ENCODE measurements at regions of chr22 and their contacts with region 1.

Region 1: DNA sequence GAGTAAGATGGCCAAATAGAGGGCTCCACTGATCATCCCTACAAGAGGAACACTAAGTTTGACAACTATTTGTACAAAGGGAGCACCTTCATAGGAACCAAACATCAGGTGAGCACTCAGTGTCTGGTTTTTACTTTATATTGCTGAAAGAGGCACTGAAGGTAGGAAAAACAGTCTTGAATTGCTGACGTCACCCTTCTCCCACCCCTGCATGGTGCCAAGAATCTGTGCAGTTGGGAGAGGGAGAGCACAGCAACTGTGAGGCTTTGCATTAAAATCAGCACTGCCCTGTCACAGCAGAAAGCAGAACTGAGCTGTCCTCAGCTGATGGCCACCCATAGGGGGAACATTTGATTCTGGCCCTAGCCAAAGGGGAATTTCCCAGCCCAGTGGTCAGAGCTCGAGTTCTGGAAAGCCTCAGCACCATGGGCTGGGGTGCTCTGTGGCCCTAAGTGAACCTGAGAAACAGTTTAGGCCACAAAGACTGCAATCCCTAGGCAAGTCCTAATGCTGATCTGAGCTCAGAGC is 37.9 kb downstream of the PIWIL3 start:
- DNase-seq: no peak
- ATAC-seq: no peak
- H3K4me3 ChIP-seq: no peak overlapping the region
- H3K27ac ChIP-seq: no peak overlapping the region
- H3K4me1 ChIP-seq: no peaks in the 10 kb centered on the region
- CTCF ChIP-seq: no peak
- EP300 ChIP-seq: no peak
- POLR2A ChIP-seq: no peak
- RAD21 ChIP-seq: no peak

Region 2: DNA sequence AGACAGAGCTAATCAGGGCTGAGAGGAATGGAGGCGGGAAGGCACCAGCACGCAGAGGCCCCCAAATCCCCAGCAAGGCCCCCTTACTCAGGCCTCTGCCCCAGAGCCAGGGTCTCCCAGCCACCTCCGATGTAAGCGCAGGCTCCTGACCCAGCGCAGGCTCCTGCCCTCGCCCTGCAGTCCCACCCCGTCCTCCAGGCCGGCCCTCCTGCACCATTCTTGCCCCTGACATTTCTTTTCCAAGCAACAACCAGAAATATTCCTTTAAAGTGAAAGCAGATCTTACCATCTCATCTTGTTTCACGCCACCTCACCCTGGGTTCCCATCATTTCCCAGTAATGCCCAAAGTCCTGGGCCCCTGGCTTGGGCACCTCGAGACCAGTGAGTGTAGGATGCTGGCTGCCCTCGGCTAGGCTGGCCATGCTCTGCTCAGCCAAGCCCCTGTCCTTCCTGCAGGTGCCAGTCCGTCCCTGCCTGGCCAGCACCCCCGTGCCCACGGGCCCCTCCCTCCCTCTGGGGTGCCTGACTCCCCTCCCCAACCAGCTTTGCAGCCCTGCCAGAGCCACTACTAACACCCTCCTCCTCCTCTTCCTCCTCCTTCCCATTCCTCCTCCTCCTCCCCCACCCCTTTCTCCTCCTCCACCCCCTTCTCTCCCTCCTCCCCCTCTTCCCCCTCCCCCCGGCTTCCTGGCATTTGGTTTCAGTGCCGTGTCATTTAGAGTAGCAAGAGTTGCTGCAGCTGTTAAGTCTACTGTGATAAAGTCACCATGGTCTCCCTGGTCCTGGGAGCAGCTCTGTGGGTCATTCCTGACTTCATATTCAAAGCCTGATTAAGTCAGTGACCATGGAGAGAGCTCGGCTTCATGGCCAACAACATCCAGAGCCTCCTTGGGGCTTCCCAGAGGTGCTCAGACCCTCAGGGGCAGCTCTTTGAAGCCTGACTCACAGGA is 40.8 kb before region 1 on chr22:
- CTCF ChIA-PET with region 1: no interaction called
- POLR2A ChIA-PET with region 1: no interaction called
- DNase-seq: no peak
- ATAC-seq: no peak
- H3K4me3 ChIP-seq: no peak overlapping the region
- H3K27ac ChIP-seq: no peak overlapping the region
- H3K4me1 ChIP-seq: no peaks in the 10 kb centered on the region
- CTCF ChIP-seq: no peak
- EP300 ChIP-seq: no peak
- POLR2A ChIP-seq: no peak
- RAD21 ChIP-seq: no peak

Region 3: DNA sequence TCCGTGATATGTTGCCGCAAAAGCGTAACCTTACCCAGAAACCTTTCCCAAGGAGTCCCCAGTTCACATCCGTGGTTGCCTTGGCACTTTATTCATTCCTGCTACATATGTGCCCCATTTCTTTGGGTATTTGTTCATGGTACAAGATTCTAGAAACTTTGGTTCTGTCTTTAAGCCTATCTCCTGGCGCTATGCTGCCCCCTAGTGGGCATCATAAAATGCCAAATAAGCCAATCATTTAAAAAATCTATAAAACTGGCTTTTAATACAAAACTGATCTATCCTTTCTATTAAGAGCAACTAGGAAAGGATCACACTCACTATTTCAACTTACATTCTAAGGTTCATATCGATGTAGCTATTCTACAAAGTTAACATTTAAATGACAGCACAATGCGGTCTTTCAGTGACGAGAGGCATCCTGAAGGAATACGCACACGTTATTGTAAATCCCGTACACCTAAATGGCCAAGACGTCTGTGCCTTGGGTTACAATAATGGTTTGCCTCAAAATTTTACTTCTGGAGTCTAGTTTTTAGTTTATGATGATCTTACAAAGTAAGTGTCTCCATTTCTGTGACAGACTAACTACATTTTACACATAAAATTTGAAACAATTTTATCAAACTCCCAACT is 21.7 kb after region 1 on chr22:
- CTCF ChIA-PET with region 1: interaction called, 13 read pairs
- POLR2A ChIA-PET with region 1: no interaction called
- DNase-seq: peak; percentile 14 to 40
- ATAC-seq: peak in 1 of 2 experiments; percentile 35; a peak in 1 of 6 replicates
- H3K4me3 ChIP-seq: no peak overlapping the region
- H3K27ac ChIP-seq: no peak overlapping the region
- H3K4me1 ChIP-seq: no peaks in the 10 kb centered on the region
- CTCF ChIP-seq: peak; percentile 82
- EP300 ChIP-seq: no peak
- POLR2A ChIP-seq: no peak
- RAD21 ChIP-seq: peak; percentile 80 to 86

Region 4: GRCh38 chr22:24768537-24769374 is 32.2 kb after region 1 on chr22:
- CTCF ChIA-PET with region 1: no interaction called
- POLR2A ChIA-PET with region 1: no interaction called
- DNase-seq: peak; percentile 61 to 68
- ATAC-seq: peak; percentile 91 to 95
- H3K4me3 ChIP-seq: no peak overlapping the region
- H3K27ac ChIP-seq: no peak overlapping the region
- H3K4me1 ChIP-seq: no peaks in the 10 kb centered on the region
- CTCF ChIP-seq: peak; percentile 58
- EP300 ChIP-seq: no peak
- POLR2A ChIP-seq: no peak
- RAD21 ChIP-seq: peak; percentile 76

Measured in A549 (cell line).